ENCODE measurements at regions of chr9 and their contacts with region 1.

Region 1: DNA sequence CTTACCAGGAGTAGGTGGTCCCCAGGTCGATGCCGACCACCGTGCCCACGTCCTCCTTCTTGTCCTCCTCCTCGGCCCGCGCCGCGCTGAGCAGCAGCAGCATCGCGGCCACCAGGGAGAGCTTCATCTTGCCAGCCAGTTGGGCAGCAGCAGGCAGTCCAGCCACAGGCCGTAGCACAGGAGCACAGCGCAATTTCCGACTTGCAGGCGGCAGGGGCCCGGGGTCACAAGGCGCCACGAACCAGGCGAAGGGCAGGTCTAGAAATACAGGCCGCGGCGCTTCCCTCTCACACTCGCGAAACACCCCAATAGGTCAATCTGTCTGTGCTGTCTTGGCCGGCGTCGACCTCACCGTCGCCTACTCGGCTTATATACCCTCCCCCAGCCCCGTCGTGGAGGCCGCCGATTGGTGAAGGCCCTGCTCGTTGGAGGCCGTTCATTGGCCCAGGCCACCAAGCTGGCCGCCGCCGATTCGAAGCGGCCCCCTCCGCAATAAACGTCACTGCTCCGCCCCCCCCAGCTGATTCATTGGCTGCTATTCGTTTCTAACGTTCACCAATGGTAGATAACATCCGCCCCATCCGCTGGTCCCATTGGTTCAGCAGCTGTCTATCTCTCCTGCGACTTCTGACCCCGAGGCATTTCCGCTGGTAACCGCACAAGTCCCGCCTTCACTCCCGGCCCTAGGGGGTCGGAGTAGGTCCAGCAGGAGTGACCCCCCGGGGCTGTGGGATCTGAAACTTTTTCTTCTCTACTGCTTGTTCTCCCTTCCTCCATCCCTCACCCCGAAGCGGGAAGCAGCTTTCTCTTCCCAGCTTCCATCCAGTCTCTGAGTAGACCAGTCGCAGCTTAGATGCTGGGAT is at the start of gene HSPA5:
- DNase-seq: peak; percentile 100
- ATAC-seq: peak; percentile 89
- H3K4me3 Mint-ChIP-seq: peak within 1 kb of the TSS; percentile 90
- H3K27ac Mint-ChIP-seq: peak within 1 kb of the TSS; percentile 96
- H3K4me1 Mint-ChIP-seq: peaks cover 50% of the 10 kb centered on the region
- H3K27me3 Mint-ChIP-seq: no peaks in the 10 kb centered on the region
- total RNA-seq, gene HSPA5: 179 to 188 TPM

Region 2: GRCh38 chr9:124868511-124869465 is 372.4 kb before region 1 on chr9:
- CTCF ChIA-PET with region 1: no interaction called
- POLR2A ChIA-PET with region 1: interaction called, 6 read pairs
- intact Hi-C with region 1: loop called (anchors 1 to 2 kb)
- DNase-seq: peak; percentile 96
- ATAC-seq: peak; percentile 59
- H3K4me3 Mint-ChIP-seq: peak overlapping the region; percentile 98
- H3K27ac Mint-ChIP-seq: peak overlapping the region; percentile 98
- H3K4me1 Mint-ChIP-seq: peaks cover 42% of the 10 kb centered on the region
- H3K27me3 Mint-ChIP-seq: no peaks in the 10 kb centered on the region

Region 3: GRCh38 chr9:124960409-124960752 is 280.9 kb before region 1 on chr9:
- CTCF ChIA-PET with region 1: no interaction called
- POLR2A ChIA-PET with region 1: no interaction called
- intact Hi-C with region 1: no loop called
- DNase-seq: no peak
- ATAC-seq: no peak
- H3K4me3 Mint-ChIP-seq: no peak overlapping the region
- H3K27ac Mint-ChIP-seq: no peak overlapping the region
- H3K4me1 Mint-ChIP-seq: peaks cover 17% of the 10 kb centered on the region
- H3K27me3 Mint-ChIP-seq: no peaks in the 10 kb centered on the region

Region 4: GRCh38 chr9:125066839-125067619 is 174.2 kb before region 1 on chr9:
- CTCF ChIA-PET with region 1: no interaction called
- POLR2A ChIA-PET with region 1: no interaction called
- intact Hi-C with region 1: no loop called
- DNase-seq: no peak
- ATAC-seq: no peak
- H3K4me3 Mint-ChIP-seq: no peak overlapping the region
- H3K27ac Mint-ChIP-seq: no peak overlapping the region
- H3K4me1 Mint-ChIP-seq: peaks cover 2% of the 10 kb centered on the region
- H3K27me3 Mint-ChIP-seq: no peaks in the 10 kb centered on the region

Region 5: DNA sequence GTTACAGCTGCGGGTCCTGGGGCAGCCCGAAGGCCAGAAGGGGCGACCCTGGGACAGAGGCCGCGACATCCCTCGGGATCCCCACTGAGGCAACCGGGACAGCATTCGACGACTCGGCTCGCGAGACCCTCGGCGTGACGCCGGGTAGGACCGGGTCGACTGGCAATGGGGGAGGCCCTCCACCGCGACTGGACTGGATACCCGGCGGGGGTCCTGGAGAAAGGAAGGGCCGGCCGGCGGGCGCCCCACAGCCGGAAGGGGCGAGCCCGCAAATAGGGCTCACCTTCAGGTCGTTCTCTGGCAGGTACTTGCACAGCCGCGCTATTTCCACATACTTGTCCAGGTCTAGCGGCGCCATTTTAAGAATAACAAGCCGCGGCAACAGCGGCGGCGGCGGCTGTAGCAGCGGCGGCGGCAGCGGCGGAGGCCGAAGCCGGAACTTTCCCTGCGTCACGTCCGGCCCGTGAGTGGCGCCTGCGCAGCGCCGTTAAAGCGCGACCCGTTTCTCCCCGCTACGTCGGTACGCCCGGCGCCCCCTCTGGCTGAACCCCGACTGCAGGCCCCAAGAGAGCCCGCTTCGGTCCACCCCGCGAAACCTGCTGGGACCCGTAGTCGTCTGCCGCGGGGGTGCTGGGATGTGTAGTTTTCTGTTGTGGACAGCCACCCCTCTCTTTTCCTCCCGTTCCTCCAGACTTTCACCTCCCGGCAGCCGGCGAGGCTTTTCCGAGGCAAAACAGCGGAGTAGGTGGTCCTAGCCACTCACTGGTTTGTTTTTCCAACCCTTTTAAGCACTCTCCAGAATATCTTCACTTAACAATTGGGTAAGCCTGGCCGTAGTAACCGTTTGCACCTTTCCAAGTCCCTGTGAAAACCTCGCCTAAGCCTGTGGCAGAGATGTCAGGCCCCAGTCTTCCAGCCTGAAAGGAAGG is 51.6 kb before region 1 on chr9 and contains the start of gene PPP6C:
- CTCF ChIA-PET with region 1: interaction called, 4 read pairs
- POLR2A ChIA-PET with region 1: interaction called, 4 read pairs
- intact Hi-C with region 1: loop called (anchors 1 to 2 kb)
- DNase-seq: peak; percentile 99
- ATAC-seq: peak; percentile 96
- H3K4me3 Mint-ChIP-seq: peak within 1 kb of the TSS; percentile 83
- H3K27ac Mint-ChIP-seq: peak within 1 kb of the TSS; percentile 86
- H3K4me1 Mint-ChIP-seq: peaks cover 69% of the 10 kb centered on the region
- H3K27me3 Mint-ChIP-seq: no peaks in the 10 kb centered on the region
- total RNA-seq, gene PPP6C: 35.1 to 47.3 TPM

Region 6: GRCh38 chr9:125293134-125293533 is 51.9 kb after region 1 on chr9:
- CTCF ChIA-PET with region 1: interaction called, 4 read pairs
- POLR2A ChIA-PET with region 1: interaction called, 5 read pairs
- intact Hi-C with region 1: loop called in 1 of 2 experiments (anchors 5 kb)
- DNase-seq: no peak
- ATAC-seq: peak; percentile 86
- H3K4me3 Mint-ChIP-seq: no peak overlapping the region
- H3K27ac Mint-ChIP-seq: no peak overlapping the region
- H3K4me1 Mint-ChIP-seq: peaks cover 2% of the 10 kb centered on the region
- H3K27me3 Mint-ChIP-seq: no peaks in the 10 kb centered on the region

Region 7: DNA sequence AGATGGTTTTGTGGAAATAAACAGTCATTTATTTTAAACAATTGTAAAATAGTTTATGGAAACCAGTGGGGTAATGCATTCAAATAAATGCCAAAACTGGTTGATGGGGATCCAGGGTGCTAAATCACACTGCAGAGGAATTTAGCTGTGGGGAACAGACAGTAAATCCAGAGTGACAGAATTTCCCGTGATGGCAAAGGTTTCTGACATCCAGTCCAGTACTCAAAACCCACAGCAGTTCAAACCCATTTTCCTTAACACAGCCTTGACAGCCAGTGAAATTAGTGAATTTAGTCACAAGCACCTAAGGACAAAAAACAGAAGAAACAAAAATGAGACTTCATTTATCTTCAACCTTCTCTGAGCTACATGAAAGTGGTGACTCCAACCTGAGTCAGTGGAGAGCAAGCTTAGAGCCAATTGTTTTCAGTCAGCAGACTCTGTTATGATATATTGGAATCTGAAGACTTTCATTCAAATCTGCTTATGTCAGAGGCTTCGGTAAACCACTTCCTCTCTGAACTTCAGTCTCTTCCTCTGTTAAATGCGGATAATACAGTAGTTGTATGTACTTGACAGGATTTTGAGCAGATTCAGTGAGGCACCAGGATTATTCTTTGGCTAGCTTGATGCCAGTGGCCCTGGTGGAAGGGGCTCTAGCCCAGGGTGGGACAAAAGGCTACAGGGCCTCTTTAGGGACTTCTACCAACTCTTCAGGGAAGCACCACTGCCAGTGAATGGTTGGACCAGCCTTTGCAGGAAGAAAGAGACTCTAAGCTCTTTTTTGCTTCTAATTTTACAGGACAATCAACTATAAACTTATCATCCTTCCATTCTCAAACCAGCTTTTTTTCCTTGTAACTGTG is 280.5 kb after region 1 on chr9:
- CTCF ChIA-PET with region 1: no interaction called
- POLR2A ChIA-PET with region 1: no interaction called
- intact Hi-C with region 1: loop called in 1 of 2 experiments (anchors 5 kb)
- DNase-seq: peak; percentile 63
- ATAC-seq: peak; percentile 97
- H3K4me3 Mint-ChIP-seq: peak overlapping the region; percentile 27
- H3K27ac Mint-ChIP-seq: peak overlapping the region; percentile 86
- H3K4me1 Mint-ChIP-seq: peaks cover 44% of the 10 kb centered on the region
- H3K27me3 Mint-ChIP-seq: no peaks in the 10 kb centered on the region

Region 8: DNA sequence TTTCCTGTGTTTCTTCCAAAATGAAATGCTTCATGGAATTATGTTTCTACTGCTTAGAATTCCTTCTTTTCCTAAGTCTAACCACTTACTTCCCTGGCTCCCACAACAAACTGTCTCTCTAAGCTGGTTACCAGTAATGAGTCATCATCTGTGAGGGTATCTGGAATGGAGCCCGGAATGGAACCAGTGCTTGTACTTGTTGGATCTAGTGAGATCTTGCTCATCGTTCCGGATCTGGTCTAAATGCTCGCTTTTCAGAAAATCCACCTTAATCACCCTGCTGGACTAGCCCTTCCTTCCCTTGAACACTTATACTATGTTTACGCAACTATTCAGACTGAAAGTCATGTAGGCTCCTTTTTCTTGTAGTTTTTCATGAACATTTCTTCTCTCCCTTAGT is 690.8 kb after region 1 on chr9:
- CTCF ChIA-PET with region 1: no interaction called
- POLR2A ChIA-PET with region 1: no interaction called
- intact Hi-C with region 1: no loop called
- DNase-seq: no peak
- ATAC-seq: no peak
- H3K4me3 Mint-ChIP-seq: no peak overlapping the region
- H3K27ac Mint-ChIP-seq: no peak overlapping the region
- H3K4me1 Mint-ChIP-seq: no peaks in the 10 kb centered on the region
- H3K27me3 Mint-ChIP-seq: no peaks in the 10 kb centered on the region